Ovary (tissue), 10 donors: ENCODE measurements at regions of chr15 and their contacts with region 1.

Region 1: GRCh38 chr15:74373731-74374647 is 6.5 kb upstream of the CYP11A1 start:
- DNase-seq: peak; percentile 94 to 96 (median 96)
- H3K4me3 ChIP-seq: peak overlapping the region; percentile 57
- H3K27ac ChIP-seq: peak overlapping the region in 1 of 2 donors; percentile 61
- H3K4me1 ChIP-seq: peaks cover 6% of the 10 kb centered on the region
- H3K27me3 ChIP-seq: no peaks in the 10 kb centered on the region
- CTCF ChIP-seq: peak; percentile 73 to 84 (median 81)
- EP300 ChIP-seq: no peak
- POLR2A ChIP-seq: peak; percentile 26

Region 2: GRCh38 chr15:74345051-74345450 is 28.9 kb before region 1 on chr15:
- intact Hi-C with region 1: no loop called
- DNase-seq: peak in 2 of 5 donors; percentile 23 to 31
- H3K4me3 ChIP-seq: no peak overlapping the region
- H3K27ac ChIP-seq: no peak overlapping the region
- H3K4me1 ChIP-seq: peaks cover 9% of the 10 kb centered on the region
- H3K27me3 ChIP-seq: no peaks in the 10 kb centered on the region
- CTCF ChIP-seq: no peak
- EP300 ChIP-seq: no peak
- POLR2A ChIP-seq: no peak

Region 3: GRCh38 chr15:74433592-74434262 is 59.7 kb after region 1 on chr15 and contains the start of gene SEMA7A:
- intact Hi-C with region 1: loop called in 1 of 4 experiments (anchors 2 kb)
- DNase-seq: peak; percentile 79 to 86 (median 85)
- H3K4me3 ChIP-seq: peak within 1 kb of the TSS; percentile 54
- H3K27ac ChIP-seq: peak within 1 kb of the TSS; percentile 3 to 49
- H3K4me1 ChIP-seq: peaks cover 9% of the 10 kb centered on the region
- H3K27me3 ChIP-seq: no peaks in the 10 kb centered on the region
- CTCF ChIP-seq: peak in 1 of 3 donors; percentile 23
- EP300 ChIP-seq: no peak
- POLR2A ChIP-seq: peak; percentile 69
- total RNA-seq, gene SEMA7A: 3.2 to 10.1 (median 8.3) TPM

Region 4: GRCh38 chr15:74635228-74635627 is 261.2 kb after region 1 on chr15:
- intact Hi-C with region 1: loop called in 2 of 4 experiments (anchors 5 to 10 kb)
- DNase-seq: peak in 3 of 5 donors; percentile 59 to 71 (median 61)
- H3K4me3 ChIP-seq: no peak overlapping the region
- H3K27ac ChIP-seq: no peak overlapping the region
- H3K4me1 ChIP-seq: no peaks in the 10 kb centered on the region
- H3K27me3 ChIP-seq: no peaks in the 10 kb centered on the region
- CTCF ChIP-seq: peak; percentile 26 to 75 (median 72)
- EP300 ChIP-seq: no peak
- POLR2A ChIP-seq: no peak

Region 5: GRCh38 chr15:74768771-74769342 is 394.9 kb after region 1 on chr15:
- intact Hi-C with region 1: loop called in 3 of 4 experiments (anchors 5 to 10 kb)
- DNase-seq: peak; percentile 50 to 69 (median 67)
- H3K4me3 ChIP-seq: no peak overlapping the region
- H3K27ac ChIP-seq: no peak overlapping the region
- H3K4me1 ChIP-seq: no peaks in the 10 kb centered on the region
- H3K27me3 ChIP-seq: no peaks in the 10 kb centered on the region
- CTCF ChIP-seq: peak; percentile 65 to 79 (median 78)
- EP300 ChIP-seq: no peak
- POLR2A ChIP-seq: no peak